HepG2 (cell line): ENCODE measurements at regions of chr11 and their contacts with region 1.

Region 1: GRCh38 chr11:56152333-56152732 is 7.8 kb downstream of the OR8K5 start:
- DNase-seq: no peak
- ATAC-seq: no peak
- H3K4me3 ChIP-seq: no peak overlapping the region
- H3K27ac ChIP-seq: no peak overlapping the region
- H3K4me1 ChIP-seq: no peaks in the 10 kb centered on the region
- H3K27me3 ChIP-seq: no peaks in the 10 kb centered on the region
- CTCF ChIP-seq: no peak
- EP300 ChIP-seq: no peak
- POLR2A ChIP-seq: no peak
- RAD21 ChIP-seq: no peak

Region 2: DNA sequence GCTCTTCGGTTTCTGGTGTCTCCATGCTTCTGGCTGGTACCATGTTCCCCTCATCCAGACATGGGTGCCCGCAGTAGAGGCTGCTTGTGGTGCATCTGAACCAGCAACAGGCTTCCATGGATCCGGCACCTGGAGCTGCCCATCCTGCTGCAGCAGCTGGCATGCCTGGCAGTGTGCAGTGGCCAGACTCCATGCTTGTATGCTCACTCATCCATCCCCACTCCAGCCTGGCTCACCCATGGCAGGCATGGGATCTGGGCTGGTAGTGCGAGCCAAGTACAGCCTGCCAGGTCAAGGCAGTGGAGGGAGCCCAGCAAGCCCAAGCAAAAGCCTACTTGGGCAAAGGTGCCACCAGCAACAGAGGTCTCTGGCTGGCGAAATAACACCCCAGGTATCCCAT is 231.8 kb before region 1 on chr11:
- CTCF ChIA-PET with region 1: no interaction called
- POLR2A ChIA-PET with region 1: no interaction called
- in situ Hi-C with region 1: no loop called
- intact Hi-C with region 1: no loop called
- DNase-seq: no peak
- ATAC-seq: no peak
- H3K4me3 ChIP-seq: no peak overlapping the region
- H3K27ac ChIP-seq: no peak overlapping the region
- H3K4me1 ChIP-seq: no peaks in the 10 kb centered on the region
- H3K27me3 ChIP-seq: no peaks in the 10 kb centered on the region
- CTCF ChIP-seq: no peak
- EP300 ChIP-seq: no peak
- POLR2A ChIP-seq: no peak
- RAD21 ChIP-seq: no peak

Region 3: DNA sequence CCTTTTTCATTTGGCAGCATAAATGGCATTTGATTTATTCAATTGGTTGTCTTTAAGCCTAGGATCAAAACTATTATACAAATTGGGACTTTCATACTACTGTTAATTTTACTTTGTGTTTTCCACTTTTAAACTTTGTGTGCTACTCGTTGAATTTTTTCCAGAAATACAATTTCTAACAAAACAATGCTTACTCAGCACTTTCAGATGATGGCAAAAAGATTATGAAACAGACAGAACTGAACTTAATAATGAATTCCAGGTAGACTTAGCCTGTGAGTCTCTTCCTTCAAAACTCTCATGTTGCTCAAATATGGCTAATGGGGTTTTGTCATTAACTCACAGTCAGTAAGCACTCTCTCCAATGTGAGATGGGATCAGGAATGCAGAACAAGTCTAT is 55.5 kb after region 1 on chr11:
- CTCF ChIA-PET with region 1: no interaction called
- POLR2A ChIA-PET with region 1: no interaction called
- in situ Hi-C with region 1: no loop called
- intact Hi-C with region 1: loop called (anchors 10 kb)
- DNase-seq: no peak
- ATAC-seq: no peak
- H3K4me3 ChIP-seq: no peak overlapping the region
- H3K27ac ChIP-seq: no peak overlapping the region
- H3K4me1 ChIP-seq: no peaks in the 10 kb centered on the region
- H3K27me3 ChIP-seq: no peaks in the 10 kb centered on the region
- CTCF ChIP-seq: no peak
- EP300 ChIP-seq: no peak
- POLR2A ChIP-seq: no peak
- RAD21 ChIP-seq: no peak

Region 4: DNA sequence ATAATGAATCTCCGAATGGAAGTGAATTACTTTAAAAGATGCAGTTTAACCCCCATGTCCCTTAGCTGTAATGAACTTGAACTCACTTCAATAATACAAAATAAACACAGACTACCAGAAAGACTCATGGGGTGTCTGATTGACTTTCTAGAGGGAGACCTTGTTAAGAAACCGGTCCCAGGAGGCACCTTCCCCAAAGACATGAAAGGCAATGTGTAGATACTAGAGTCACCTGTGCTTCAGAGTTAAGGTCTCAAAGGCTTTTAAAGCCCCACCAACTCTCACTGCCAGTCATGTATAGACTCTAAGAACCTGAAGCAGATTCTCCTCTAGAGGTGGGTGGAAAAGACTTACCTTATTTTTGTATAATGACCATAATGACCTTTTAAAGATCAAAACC is 201.7 kb after region 1 on chr11 and contains the start of gene OR8J1:
- CTCF ChIA-PET with region 1: no interaction called
- POLR2A ChIA-PET with region 1: no interaction called
- in situ Hi-C with region 1: no loop called
- intact Hi-C with region 1: no loop called
- DNase-seq: no peak
- ATAC-seq: no peak
- H3K4me3 ChIP-seq: no peak within 1 kb of the TSS
- H3K27ac ChIP-seq: no peak within 1 kb of the TSS
- H3K4me1 ChIP-seq: no peaks in the 10 kb centered on the region
- H3K27me3 ChIP-seq: no peaks in the 10 kb centered on the region
- CTCF ChIP-seq: no peak
- EP300 ChIP-seq: no peak
- POLR2A ChIP-seq: no peak
- RAD21 ChIP-seq: no peak
- total RNA-seq, gene OR8J1: not detected in 2 replicates